Calu3 (cell line): ENCODE measurements at regions of chr7 and their contacts with region 1.

Region 1: GRCh38 chr7:54773472-54774399 is 14.7 kb upstream of the SEC61G start:
- DNase-seq: peak; percentile 95
- H3K4me3 Mint-ChIP-seq: peak overlapping the region; percentile 67
- H3K27ac Mint-ChIP-seq: peak overlapping the region; percentile 69
- H3K4me1 Mint-ChIP-seq: peaks cover 21% of the 10 kb centered on the region
- H3K27me3 Mint-ChIP-seq: no peaks in the 10 kb centered on the region
- CTCF ChIP-seq: peak; percentile 97

Region 2: GRCh38 chr7:54712820-54713219 is 60.9 kb before region 1 on chr7:
- CTCF ChIA-PET with region 1: no interaction called
- intact Hi-C with region 1: no loop called
- DNase-seq: no peak
- H3K4me3 Mint-ChIP-seq: no peak overlapping the region
- H3K27ac Mint-ChIP-seq: no peak overlapping the region
- H3K4me1 Mint-ChIP-seq: no peaks in the 10 kb centered on the region
- H3K27me3 Mint-ChIP-seq: peaks cover 28% of the 10 kb centered on the region
- CTCF ChIP-seq: no peak

Region 3: DNA sequence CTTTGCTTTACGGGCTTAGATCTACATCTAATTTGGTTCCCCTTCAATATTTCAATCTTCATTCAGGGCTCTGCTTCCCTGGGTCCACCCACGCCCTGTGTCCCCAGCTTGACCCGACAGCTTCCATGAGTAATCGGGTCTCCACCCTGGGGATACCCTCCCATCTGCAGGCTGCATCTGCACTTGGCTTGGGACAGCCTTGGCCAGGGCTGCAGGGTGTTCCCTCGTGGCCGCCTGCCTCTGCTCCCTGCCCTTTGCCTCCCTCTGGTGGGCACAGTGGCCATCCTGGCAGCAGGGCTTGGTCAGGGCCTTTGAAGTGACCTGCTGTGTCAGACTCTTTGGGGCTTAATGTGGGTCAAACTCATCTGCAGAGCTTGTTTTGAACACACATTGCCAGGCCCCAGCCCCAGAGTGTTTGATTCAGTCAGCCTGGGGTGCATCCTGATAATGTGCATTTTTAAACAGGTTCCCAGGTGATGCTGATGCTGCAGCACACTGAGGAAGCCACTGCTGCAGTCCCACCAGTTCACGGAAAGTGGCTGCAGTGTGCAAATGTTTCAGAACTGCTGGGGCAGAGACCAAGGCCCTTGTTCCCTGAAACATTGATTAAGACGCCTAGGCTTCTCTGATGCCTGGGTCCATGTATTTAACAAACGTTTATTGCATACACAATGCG is 65.9 kb after region 1 on chr7:
- CTCF ChIA-PET with region 1: interaction called, 5 read pairs
- intact Hi-C with region 1: loop called (anchors 1 kb)
- DNase-seq: peak; percentile 95
- H3K4me3 Mint-ChIP-seq: peak overlapping the region; percentile 13
- H3K27ac Mint-ChIP-seq: peak overlapping the region; percentile 27
- H3K4me1 Mint-ChIP-seq: peaks cover 31% of the 10 kb centered on the region
- H3K27me3 Mint-ChIP-seq: no peaks in the 10 kb centered on the region
- CTCF ChIP-seq: peak; percentile 96

Region 4: GRCh38 chr7:55018361-55019190 is 244.8 kb after region 1 on chr7 and contains the start of gene EGFR:
- CTCF ChIA-PET with region 1: no interaction called
- intact Hi-C with region 1: loop called (anchors 2 kb)
- DNase-seq: peak; percentile 90
- H3K4me3 Mint-ChIP-seq: peak within 1 kb of the TSS; percentile 84
- H3K27ac Mint-ChIP-seq: peak within 1 kb of the TSS; percentile 84
- H3K4me1 Mint-ChIP-seq: peaks cover 37% of the 10 kb centered on the region
- H3K27me3 Mint-ChIP-seq: no peaks in the 10 kb centered on the region
- CTCF ChIP-seq: no peak
- total RNA-seq, gene EGFR: 85.3 and 87.4 TPM in 2 replicates

Region 5: GRCh38 chr7:55132890-55133551 is 359.3 kb after region 1 on chr7:
- CTCF ChIA-PET with region 1: interaction called, 4 read pairs
- intact Hi-C with region 1: loop called (anchors 5 kb)
- DNase-seq: peak; percentile 89
- H3K4me3 Mint-ChIP-seq: peak overlapping the region; percentile 39
- H3K27ac Mint-ChIP-seq: peak overlapping the region; percentile 95
- H3K4me1 Mint-ChIP-seq: peaks cover 72% of the 10 kb centered on the region
- H3K27me3 Mint-ChIP-seq: no peaks in the 10 kb centered on the region
- CTCF ChIP-seq: peak; percentile 20

Region 6: DNA sequence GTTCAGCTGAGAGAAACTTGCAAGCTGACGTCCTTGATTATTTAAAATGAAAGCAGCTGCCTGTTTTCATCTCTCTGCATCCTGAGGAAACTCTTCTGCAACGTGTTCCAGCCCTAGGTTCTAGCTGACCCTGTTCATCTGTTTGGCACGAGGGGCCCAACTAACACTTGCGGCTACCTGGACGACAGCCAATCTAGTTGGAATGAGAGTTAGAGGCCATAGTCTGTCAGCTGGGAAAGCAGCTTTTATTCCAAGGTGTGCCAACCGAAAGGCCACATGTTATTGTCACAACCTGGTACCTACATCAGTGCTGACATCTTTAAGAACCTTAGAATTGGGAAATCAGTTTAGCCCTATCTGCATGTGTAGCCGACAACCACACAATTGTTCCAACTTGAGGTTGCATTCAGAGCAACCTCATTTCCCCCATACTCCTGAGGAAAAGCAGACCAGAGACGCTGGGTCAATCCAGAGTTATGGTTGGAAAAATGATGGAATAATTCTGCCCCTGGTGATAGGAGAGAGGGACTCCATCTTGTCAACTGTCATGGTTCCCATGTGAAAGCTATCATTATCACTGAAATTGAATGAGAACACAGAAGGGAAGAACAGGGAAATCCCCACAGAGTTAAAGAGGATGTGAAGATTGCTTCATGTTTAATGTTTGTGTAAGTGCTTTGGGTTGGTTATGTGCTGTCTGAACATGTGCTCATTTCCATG is 366.6 kb after region 1 on chr7:
- CTCF ChIA-PET with region 1: no interaction called
- intact Hi-C with region 1: loop called (anchors 5 kb)
- DNase-seq: no peak
- H3K4me3 Mint-ChIP-seq: no peak overlapping the region
- H3K27ac Mint-ChIP-seq: no peak overlapping the region
- H3K4me1 Mint-ChIP-seq: peaks cover 61% of the 10 kb centered on the region
- H3K27me3 Mint-ChIP-seq: no peaks in the 10 kb centered on the region
- CTCF ChIP-seq: no peak

Region 7: GRCh38 chr7:55271069-55271626 is 497.4 kb after region 1 on chr7:
- CTCF ChIA-PET with region 1: no interaction called
- intact Hi-C with region 1: loop called (anchors 1 kb)
- DNase-seq: peak; percentile 25
- H3K4me3 Mint-ChIP-seq: no peak overlapping the region
- H3K27ac Mint-ChIP-seq: no peak overlapping the region
- H3K4me1 Mint-ChIP-seq: peaks cover under 1% of the 10 kb centered on the region
- H3K27me3 Mint-ChIP-seq: peaks cover 84% of the 10 kb centered on the region
- CTCF ChIP-seq: peak; percentile 54

Region 8: GRCh38 chr7:55415173-55415778 is 641.5 kb after region 1 on chr7:
- CTCF ChIA-PET with region 1: interaction called, 6 read pairs
- intact Hi-C with region 1: loop called (anchors 1 kb)
- DNase-seq: peak; percentile 93
- H3K4me3 Mint-ChIP-seq: no peak overlapping the region
- H3K27ac Mint-ChIP-seq: no peak overlapping the region
- H3K4me1 Mint-ChIP-seq: no peaks in the 10 kb centered on the region
- H3K27me3 Mint-ChIP-seq: no peaks in the 10 kb centered on the region
- CTCF ChIP-seq: peak; percentile 91